AG04449 (cell line): ENCODE measurements at regions of chr17 and their contacts with region 1.

Region 1: DNA sequence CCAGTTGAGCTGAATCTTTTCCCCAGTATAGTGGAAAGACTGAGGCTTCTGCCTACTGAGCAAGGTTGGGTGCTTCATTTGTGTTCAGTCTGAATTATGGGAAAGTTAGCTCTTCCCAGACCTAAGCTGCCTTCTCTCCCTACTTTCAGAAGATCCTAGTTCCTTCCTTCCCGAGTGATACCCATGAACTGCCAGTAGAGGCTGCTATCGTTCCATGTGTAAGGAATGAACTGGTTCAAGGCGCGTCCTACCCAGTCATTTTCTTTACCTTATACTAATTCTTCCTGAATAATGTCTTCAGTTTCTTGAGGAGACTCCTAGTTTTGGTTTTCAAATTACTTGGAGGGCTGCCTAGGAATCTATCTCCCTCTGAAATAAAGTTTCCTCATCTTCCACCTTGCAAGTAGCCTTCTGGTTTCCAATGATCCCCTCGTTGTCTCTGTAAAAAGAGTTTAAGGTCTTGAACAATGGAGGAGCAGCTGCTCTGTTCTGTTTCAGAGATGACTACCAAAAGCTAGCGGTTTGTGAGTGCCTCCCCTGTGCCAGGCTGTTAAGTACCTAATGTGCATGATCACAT is 934 bp upstream of the AOC2 start:
- DNase-seq: no peak
- H3K4me3 ChIP-seq: no peak overlapping the region
- CTCF ChIP-seq: peak; percentile 94

Region 2: DNA sequence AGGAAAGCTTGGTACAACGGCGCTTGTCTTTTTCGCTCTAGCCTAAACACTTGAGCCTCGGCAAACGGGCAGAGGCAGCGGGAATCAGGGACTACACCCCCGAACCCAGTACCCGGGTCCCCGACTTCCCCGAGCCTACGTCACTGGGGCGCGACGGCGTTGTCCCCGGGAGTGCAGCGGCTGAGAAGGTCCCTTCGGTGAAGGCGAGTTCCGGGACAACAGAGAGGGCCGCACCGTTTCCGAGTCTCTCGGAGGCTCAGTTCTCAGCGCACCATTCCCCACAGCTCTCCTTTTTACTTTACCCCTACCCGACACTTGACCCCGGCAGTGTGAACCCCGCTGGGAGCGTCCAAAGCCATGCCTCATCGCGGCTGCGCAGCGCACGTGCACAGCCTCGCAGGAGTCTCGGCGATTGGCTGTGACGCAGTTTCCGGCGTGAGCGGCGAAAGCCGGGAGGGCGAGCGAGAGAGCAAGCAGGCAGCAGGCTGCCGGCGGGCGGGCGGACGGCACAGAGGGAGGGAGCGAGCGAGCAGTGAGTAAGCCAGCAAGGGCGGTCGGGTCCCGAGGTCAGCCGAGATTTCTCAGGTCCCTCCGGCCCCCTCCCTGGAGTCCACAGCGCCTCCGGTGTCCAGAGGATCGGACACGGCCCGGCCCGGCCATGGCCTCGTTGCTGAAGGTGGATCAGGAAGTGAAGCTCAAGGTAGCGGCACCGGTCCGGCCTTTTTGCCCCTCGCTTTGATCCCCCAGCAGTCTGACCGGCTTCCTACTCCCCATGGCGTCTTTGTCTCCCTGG is 10.3 kb before region 1 on chr17 and contains the start of gene PSME3:
- CTCF ChIA-PET with region 1: interaction called, 50 read pairs
- POLR2A ChIA-PET with region 1: no interaction called
- DNase-seq: no peak
- H3K4me3 ChIP-seq: peak within 1 kb of the TSS; percentile 94
- CTCF ChIP-seq: no peak

Region 3: DNA sequence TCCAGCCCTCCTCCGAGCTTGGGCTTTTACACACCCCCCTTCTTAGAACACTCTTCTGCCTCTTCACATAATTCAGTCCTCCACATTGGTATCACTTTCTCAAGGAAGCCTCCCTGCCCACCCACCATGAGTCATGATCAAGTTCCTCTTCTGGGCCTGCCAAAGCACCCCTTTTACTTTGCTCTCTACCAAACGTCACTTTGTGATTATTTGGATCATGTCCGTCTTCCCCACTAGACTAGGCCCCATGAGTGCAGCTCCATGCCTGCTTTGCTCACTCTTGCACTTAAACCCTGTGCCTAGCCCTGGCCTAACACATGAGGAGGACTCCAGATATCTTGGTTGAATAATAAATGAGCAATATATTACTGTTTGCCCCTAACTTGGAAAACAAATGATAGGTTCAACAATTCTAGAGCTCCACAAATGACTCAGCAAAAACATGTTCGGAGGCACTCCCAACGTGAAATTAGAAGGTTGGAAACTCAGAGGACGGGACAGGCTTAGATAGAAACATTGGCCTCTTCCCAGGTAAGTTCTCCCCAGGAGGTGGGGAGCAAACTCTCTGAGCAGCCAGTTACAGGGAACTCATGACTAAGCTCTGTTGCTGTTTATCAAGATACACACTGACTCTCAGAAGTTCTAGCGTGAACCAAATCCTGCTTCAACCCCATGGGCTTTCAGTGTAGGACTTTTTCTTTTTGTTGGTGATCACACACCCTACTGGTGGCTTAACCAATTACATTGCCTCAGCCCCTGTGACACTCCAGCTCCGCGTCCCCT is 85.5 kb after region 1 on chr17:
- CTCF ChIA-PET with region 1: interaction called, 241 read pairs
- POLR2A ChIA-PET with region 1: interaction called, 5 read pairs
- DNase-seq: peak; percentile 28
- H3K4me3 ChIP-seq: no peak overlapping the region
- CTCF ChIP-seq: peak; percentile 41